Heart right ventricle (tissue), 16 donors: ENCODE measurements at regions of chr18 and their contacts with region 1.

Region 1: DNA sequence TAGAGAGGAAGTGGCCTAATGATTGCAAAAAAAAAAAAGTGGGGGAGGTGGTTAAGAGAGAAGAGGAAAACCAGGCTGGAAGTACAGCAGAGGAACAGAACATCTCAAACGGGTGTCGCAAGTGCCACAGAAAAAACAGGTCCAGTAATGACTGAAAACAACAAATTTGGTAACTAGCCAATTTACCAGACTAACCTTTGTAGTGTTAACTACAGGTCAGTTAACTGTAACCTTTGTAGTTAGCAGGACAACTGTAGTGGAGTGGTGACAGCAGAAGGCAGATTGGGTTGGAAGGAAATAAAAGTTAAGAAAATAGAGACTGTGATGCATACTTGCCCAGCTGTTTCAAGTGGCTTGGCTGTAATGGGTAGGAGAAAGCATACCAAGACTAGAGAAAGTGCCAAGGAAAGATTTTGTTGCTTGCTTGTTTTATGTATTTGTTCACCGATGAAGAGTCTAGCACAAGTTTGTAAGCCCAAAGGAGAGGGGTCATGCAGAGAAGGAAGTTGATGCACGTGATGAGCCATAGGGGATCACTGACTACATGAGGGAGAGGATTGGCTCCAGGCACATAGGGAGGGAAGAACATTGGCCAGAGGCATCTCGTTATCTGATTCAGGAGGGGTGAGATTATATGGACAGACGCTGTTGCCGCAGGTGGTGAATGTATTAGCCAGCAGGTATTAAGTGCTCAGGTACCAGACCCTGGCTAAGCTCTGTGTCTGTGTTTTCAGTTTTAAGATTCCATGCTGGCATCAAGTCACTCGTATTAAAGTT is 91.6 kb upstream of the CHST9 start:
- DNase-seq: no peak
- ATAC-seq: no peak
- H3K4me3 ChIP-seq: no peak overlapping the region
- H3K27ac ChIP-seq: no peak overlapping the region
- H3K4me1 ChIP-seq: no peaks in the 10 kb centered on the region
- H3K27me3 ChIP-seq: no peaks in the 10 kb centered on the region
- CTCF ChIP-seq: no peak

Region 2: DNA sequence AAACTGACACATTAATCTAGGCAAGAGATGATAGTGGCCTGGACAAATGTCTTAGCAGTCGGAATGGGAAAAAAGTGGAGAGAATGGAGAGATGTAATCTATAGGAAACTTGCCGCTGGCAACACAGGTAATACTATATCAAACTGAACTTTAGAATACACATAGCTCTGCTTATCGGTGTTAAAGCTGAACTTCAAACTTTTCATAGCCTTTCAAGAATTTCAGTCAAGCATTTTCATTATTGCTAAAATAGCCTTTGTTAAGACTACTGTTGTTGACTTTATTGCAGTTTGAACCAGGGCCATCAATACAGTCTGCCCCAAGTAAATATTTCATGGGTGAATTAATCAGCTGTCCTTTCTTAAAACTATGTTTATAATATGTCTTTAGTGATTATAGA is 78.6 kb before region 1 on chr18:
- intact Hi-C with region 1: loop called in 1 of 10 experiments (anchors 10 kb)
- DNase-seq: no peak
- ATAC-seq: no peak
- H3K4me3 ChIP-seq: no peak overlapping the region
- H3K27ac ChIP-seq: no peak overlapping the region
- H3K4me1 ChIP-seq: no peaks in the 10 kb centered on the region
- H3K27me3 ChIP-seq: no peaks in the 10 kb centered on the region
- CTCF ChIP-seq: no peak

Region 3: DNA sequence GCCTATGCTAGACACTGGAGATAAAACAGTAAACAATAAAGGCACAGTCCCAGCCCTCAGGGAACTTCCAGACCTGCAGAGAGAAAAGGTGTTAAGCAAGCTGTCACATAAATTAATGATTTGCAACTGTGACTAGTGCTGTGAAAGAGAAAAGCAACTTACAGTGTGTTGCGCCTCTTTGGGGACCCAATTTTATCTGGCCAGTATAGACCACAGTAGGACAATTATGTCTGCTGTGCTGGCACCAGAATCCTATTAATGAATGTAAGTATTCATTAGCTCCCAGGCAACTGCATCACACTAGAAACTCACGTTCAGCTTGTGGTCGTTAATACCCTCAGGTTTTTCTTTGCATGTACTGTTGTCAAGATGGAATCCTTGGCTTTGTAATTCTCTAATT is 36.3 kb before region 1 on chr18:
- intact Hi-C with region 1: no loop called
- DNase-seq: no peak
- ATAC-seq: no peak
- H3K4me3 ChIP-seq: no peak overlapping the region
- H3K27ac ChIP-seq: no peak overlapping the region
- H3K4me1 ChIP-seq: no peaks in the 10 kb centered on the region
- H3K27me3 ChIP-seq: no peaks in the 10 kb centered on the region
- CTCF ChIP-seq: no peak

Region 4: DNA sequence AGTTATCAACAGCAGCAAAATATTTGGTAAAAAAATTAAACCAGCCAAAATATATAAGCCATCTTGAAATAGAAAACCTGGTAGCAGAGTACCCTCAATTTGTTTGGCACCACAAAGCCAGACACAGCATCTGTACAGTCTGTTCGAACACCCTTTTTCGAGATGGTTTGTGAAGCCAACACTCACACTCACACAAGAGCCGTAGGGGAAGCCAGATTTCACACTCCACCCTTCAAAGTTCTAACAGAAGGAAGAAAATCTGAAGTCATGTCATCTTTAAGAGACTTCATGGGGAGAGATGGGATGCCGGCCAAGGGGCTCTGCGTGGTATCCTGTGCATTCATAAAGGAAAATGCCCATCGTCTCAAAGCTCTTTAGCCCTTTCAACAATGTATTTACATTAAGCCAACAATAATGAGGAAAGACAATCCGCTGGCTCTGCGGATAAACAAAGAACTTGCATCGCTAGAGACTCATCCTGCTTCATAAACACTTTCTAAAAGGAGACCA is 360.0 kb after region 1 on chr18:
- intact Hi-C with region 1: no loop called
- DNase-seq: no peak
- ATAC-seq: no peak
- H3K4me3 ChIP-seq: no peak overlapping the region
- H3K27ac ChIP-seq: no peak overlapping the region
- H3K4me1 ChIP-seq: no peaks in the 10 kb centered on the region
- H3K27me3 ChIP-seq: no peaks in the 10 kb centered on the region
- CTCF ChIP-seq: no peak

Region 5: GRCh38 chr18:28626757-28627156 is 1350.1 kb after region 1 on chr18:
- intact Hi-C with region 1: no loop called
- DNase-seq: no peak
- ATAC-seq: no peak
- H3K4me3 ChIP-seq: no peak overlapping the region
- H3K27ac ChIP-seq: no peak overlapping the region
- H3K4me1 ChIP-seq: no peaks in the 10 kb centered on the region
- H3K27me3 ChIP-seq: no peaks in the 10 kb centered on the region
- CTCF ChIP-seq: no peak